ENCODE measurements at regions of chr18 and their contacts with region 1.

Region 1: GRCh38 chr18:60549338-60549960 is 176.9 kb upstream of the MC4R start:
- DNase-seq: peak in 20 of 42 donors; percentile 8 to 81 (median 57)

Region 2: DNA sequence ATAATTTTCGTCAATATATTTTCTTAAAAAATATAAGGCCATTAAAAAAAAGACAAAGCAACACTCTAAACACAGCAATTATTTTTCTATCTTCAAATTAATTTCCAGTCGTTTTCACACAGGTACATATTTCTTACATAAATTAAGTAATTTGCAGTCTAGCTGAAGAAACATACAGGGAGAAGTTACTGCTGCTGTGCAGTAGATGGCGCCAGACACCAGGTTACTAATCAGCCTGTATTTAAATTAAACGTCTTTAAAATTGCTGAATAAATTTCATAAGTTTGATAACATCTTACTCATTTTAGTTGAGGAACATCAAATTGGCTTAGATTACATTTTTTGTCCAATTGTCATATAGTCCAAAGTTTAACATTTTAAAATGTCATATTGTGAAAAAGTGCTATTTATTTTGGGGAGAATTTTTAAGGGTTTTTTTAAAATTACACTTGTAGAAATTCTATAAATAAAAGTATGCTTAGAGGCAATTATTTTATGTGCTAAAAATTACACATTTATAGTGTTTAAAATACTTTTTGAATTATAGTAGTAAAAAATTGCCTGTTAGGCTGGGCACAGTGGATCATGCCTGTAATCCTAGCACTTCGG is 561.2 kb before region 1 on chr18:
- intact Hi-C with region 1: loop called (anchors 5 kb)
- DNase-seq: peak; percentile 9 to 86 (median 67)

Region 3: DNA sequence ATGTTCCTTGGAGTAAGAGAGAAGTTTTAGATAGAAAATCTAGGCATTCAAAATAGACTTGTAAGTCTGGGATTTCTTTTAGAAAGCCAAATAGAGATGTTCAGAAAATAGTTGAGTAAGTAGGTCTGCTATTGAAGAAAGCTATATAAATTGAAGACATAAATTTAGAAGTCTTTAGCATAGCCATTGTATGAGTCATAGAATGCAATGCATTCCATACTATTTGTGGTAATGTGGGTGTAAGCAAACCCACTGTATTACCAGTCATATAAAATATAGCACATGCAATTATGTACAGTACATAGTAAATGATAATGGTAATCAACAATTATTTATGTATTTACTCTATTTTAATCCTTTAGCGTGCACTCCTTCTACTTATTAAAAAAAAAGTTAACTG is 190.9 kb before region 1 on chr18:
- intact Hi-C with region 1: no loop called
- DNase-seq: no peak

Region 4: DNA sequence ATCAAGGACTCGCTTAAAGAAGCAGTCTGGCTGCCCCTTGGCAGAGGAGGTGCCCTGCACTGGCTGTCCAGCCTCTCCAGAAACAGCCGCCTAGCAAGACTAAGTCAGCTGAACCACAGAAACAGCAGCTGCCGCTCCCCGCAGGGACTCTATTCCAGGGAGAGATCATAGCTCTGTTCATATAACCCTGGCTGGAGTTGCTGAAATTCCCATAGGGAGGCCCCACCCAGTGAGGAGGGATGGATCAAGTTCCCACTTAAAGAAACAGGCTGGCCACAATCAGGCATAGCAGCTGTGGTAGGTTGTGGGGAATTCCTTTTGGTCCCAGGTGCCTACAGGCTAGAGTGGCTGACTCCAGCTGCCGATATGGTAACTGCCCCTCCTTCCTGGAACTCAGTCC is 102.6 kb before region 1 on chr18:
- intact Hi-C with region 1: no loop called
- DNase-seq: no peak